Cardiac septum (tissue), 1 donor: ENCODE measurements at regions of chr10 and their contacts with region 1.

Region 1: GRCh38 chr10:45594276-45595106 is 78.1 kb downstream of the ZFAND4 start:
- DNase-seq: peak; percentile 96

Region 2: DNA sequence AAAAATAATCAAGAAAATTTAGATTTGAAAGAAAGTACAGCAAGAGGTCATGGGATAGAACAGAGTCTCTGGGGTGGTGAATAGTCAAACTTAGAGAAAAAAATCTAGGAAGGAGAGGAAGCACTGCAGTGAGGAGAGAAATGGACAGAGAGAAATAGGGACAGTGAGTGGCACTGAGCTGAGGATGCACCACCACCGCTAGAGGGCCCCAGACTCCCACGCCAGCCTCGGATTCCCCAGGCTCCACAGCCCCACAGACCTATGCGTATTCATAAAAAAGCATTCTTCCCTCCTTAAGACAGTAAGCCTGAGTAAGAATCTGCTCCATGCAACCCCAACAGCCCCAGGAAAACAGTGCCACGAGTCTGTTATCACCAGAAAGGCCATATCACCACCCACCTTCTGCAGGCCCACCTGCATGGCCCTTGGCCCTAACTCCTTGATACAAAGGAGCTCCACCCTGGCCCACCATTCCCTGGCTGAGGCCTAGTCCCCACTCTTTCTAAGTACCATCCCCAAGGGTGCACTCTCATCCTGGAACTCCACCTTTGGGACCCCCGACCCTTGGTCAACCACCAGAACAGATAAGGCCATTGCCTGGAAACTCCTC is 129.4 kb before region 1 on chr10:
- intact Hi-C with region 1: loop called (anchors 10 kb)
- DNase-seq: peak; percentile 92

Region 3: GRCh38 chr10:45627412-45628048 is 33.0 kb after region 1 on chr10:
- intact Hi-C with region 1: loop called (anchors 1 kb)
- DNase-seq: no peak

Region 4: DNA sequence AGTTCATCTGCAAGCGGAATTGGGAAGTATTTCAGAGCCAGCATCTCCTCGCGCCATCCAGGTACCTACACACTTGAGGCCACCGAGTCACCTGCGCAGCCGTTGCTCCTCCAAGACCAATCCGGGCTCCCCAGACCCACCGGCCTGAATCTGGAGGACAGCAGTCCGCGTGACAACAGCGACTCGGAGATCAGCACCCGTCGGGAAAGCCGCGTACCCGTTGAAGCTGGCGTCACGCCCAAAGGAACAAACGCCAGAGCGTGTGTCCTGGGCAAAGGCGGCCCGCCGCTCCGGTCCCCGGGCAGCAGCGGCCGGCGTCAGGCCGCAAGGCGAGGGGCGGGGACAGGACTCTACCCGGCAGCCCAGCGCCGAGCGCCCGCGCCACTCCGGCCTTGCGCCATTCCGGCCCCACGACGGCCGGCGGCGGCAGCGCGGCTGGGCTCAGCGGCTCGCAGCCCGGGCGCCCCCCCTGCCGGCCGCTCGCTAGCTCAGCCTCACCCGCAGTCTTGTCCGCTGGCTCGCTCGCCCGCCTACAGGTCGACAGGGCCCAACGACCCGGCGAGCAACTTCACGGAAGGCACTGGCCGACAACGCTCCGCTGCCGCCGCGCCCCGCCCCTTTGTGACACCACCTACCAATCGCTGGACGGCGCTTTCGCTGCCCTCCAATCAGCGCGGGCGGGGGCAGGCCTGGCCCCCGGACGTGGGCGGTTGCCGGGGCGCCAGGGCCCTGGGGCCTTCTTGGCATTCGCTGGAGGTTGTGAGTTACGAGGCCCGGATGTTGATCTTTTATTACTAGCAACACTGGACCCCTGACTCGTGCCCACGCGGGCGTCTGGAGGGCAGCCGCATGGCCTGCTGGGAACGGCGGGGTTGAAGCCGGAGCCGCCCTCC is 77.9 kb after region 1 on chr10 and contains the start of gene ZFAND4:
- intact Hi-C with region 1: loop called (anchors 5 kb)
- DNase-seq: peak; percentile 99
- total RNA-seq, gene ZFAND4: 7.7 TPM